ENCODE measurements at regions of chr20 and their contacts with region 1.

Region 1: DNA sequence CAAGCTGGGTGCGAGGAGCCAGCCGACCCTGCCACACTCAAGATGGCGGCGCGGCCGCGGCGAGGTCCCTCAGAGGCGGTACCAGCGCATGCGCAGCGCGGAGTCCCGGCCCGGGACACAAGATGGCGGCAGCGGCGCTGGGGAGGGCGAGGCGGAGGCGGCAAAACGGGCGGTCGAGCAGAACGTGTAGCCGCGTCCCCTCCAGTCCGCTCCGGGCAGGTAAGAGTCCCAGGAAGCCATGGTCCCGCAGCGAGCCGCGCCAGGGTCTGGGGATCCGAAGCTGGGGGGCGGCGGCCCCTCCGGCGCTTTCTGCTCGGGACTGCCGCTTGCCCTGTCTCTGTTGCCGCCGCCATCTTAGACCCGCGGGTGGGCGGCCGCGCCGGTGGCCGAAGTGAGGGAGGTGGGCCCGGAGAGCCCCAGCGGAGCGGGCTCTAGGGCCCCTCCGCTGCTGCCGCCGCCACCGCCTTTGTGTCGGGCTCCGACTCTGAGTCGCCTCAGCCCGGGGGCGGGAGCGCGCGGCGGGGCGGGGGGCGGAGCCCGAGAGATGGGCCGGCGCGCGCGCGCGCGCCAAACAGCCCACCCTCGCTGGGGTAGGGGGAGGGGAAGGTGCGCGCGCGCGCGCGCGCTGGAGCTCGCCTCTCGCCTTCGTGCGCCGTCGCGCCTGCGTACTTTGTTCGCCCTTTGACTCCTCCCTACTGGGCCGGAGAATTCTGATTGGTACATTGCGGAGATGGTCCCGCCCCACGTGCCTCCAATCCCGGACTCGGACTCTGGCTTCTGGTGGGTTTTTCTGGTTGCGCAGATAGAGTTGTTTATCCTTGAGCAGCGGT is at the start of gene PCIF1:
- DNase-seq: peak; percentile 99
- H3K4me3 Mint-ChIP-seq: peak within 1 kb of the TSS; percentile 99
- H3K27ac Mint-ChIP-seq: peak within 1 kb of the TSS; percentile 99
- H3K4me1 Mint-ChIP-seq: peaks cover 21% of the 10 kb centered on the region
- H3K27me3 Mint-ChIP-seq: no peaks in the 10 kb centered on the region
- total RNA-seq, gene PCIF1: 26.1 and 27.8 TPM in 2 replicates

Region 2: GRCh38 chr20:45857114-45857881 is 77.5 kb before region 1 on chr20 and contains the starts of genes ACOT8 and ZSWIM3:
- intact Hi-C with region 1: loop called (anchors 1 kb)
- DNase-seq: peak; percentile 99
- H3K4me3 Mint-ChIP-seq: peak within 1 kb of the TSS; percentile 98
- H3K27ac Mint-ChIP-seq: peak within 1 kb of the TSS; percentile 98
- H3K4me1 Mint-ChIP-seq: peaks cover 35% of the 10 kb centered on the region
- H3K27me3 Mint-ChIP-seq: no peaks in the 10 kb centered on the region
- total RNA-seq, gene ACOT8: 27.6 and 28.5 TPM in 2 replicates
- total RNA-seq, gene ZSWIM3: 5.5 and 6.0 TPM in 2 replicates

Region 3: DNA sequence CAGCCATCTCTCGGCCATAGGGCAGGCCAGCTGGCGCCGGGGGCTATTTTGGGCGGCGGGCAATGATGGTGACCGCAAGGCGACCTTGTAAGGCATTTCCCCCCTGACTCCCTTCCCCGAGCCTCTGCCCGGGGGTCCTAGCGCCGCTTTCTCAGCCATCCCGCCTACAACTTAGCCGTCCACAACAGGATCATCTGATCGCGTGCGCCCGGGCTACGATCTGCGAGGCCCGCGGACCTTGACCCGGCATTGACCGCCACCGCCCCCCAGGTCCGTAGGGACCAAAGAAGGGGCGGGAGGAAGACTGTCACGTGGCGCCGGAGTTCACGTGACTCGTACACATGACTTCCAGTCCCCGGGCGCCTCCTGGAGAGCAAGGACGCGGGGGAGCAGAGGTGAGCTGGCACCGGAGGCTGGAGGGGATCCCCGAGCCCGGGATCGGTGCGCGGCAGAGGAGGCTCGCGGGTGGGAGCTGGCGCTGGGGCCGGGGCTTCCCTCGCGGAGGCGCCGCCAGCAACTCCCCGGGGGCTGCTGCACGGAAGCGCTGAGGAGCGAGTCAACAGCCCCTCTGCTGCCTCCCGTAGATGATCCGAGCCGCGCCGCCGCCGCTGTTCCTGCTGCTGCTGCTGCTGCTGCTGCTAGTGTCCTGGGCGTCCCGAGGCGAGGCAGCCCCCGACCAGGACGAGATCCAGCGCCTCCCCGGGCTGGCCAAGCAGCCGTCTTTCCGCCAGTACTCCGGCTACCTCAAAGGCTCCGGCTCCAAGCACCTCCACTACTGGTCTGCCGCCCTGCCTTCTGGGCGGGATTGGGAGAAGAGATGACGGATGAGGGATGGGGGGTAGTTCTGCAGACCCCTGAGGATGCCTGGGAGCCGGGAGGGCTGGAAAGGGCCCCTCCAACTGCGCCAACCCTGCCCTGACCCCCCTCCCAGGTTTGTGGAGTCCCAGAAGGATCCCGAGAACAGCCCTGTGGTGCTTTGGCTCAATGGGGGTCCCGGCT is 43.5 kb before region 1 on chr20 and contains the starts of genes CTSA and NEURL2:
- intact Hi-C with region 1: loop called (anchors 2 kb)
- DNase-seq: peak; percentile 96
- H3K4me3 Mint-ChIP-seq: peak within 1 kb of the TSS; percentile 95
- H3K27ac Mint-ChIP-seq: peak within 1 kb of the TSS; percentile 92
- H3K4me1 Mint-ChIP-seq: peaks cover 17% of the 10 kb centered on the region
- H3K27me3 Mint-ChIP-seq: no peaks in the 10 kb centered on the region
- total RNA-seq, gene CTSA: 48.7 and 50.8 TPM in 2 replicates
- total RNA-seq, gene NEURL2: 2.0 and 2.4 TPM in 2 replicates

Region 4: GRCh38 chr20:45971675-45972499 is 37.1 kb after region 1 on chr20 and contains the start of gene ZNF335:
- intact Hi-C with region 1: loop called (anchors 1 kb)
- DNase-seq: peak; percentile 99
- H3K4me3 Mint-ChIP-seq: peak within 1 kb of the TSS; percentile 93
- H3K27ac Mint-ChIP-seq: peak within 1 kb of the TSS; percentile 99
- H3K4me1 Mint-ChIP-seq: peaks cover 14% of the 10 kb centered on the region
- H3K27me3 Mint-ChIP-seq: no peaks in the 10 kb centered on the region
- total RNA-seq, gene ZNF335: 37.5 and 39.5 TPM in 2 replicates

Region 5: GRCh38 chr20:46013826-46014516 is 79.2 kb after region 1 on chr20:
- intact Hi-C with region 1: no loop called
- DNase-seq: peak; percentile 90
- H3K4me3 Mint-ChIP-seq: peak overlapping the region; percentile 69
- H3K27ac Mint-ChIP-seq: peak overlapping the region; percentile 59
- H3K4me1 Mint-ChIP-seq: peaks cover 44% of the 10 kb centered on the region
- H3K27me3 Mint-ChIP-seq: peaks cover 58% of the 10 kb centered on the region

Measured in activated CD4-positive, alpha-beta T cell treated with anti-CD3 and anti-CD28 coated beads, Interleukin-2, amount 10 ng/mL, durations not matched to agents 24 days and 14 days (primary cell).